MCF 10A (cell line): ENCODE measurements at regions of chr7 and their contacts with region 1.

Region 1: DNA sequence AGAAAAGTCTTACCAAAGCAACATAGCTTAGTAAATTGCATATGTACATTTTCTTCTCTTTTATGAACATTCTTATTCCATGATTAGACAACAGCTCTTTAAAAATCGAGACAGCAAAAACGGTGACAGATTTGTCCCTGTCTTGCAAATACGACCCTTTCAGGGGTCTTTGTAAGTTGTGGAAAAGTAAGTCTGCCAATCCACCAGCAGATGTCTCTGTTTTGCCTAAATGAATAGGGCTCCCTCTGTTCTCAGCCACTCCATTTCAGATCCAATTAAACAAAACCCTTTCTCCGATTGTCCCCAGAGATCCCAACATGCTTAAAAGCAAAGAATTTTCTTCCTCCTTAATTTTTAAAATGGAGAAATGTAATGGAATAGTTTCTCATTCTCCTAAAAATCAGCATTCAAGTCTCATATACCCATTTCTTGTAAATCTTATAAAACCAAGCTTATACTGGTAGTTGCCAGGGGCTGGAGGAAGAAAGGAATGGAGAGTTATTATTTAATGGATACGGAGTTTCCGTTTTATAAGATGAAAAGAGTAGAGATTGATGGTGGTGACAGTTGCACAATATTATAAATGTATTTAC is 61.0 kb upstream of the NFE2L3 start:
- DNase-seq: peak; percentile 60
- H3K4me3 Mint-ChIP-seq: no peak overlapping the region
- H3K27ac Mint-ChIP-seq: no peak overlapping the region
- H3K4me1 Mint-ChIP-seq: peaks cover 26% of the 10 kb centered on the region
- H3K27me3 Mint-ChIP-seq: no peaks in the 10 kb centered on the region
- CTCF ChIP-seq: peak; percentile 78

Region 2: DNA sequence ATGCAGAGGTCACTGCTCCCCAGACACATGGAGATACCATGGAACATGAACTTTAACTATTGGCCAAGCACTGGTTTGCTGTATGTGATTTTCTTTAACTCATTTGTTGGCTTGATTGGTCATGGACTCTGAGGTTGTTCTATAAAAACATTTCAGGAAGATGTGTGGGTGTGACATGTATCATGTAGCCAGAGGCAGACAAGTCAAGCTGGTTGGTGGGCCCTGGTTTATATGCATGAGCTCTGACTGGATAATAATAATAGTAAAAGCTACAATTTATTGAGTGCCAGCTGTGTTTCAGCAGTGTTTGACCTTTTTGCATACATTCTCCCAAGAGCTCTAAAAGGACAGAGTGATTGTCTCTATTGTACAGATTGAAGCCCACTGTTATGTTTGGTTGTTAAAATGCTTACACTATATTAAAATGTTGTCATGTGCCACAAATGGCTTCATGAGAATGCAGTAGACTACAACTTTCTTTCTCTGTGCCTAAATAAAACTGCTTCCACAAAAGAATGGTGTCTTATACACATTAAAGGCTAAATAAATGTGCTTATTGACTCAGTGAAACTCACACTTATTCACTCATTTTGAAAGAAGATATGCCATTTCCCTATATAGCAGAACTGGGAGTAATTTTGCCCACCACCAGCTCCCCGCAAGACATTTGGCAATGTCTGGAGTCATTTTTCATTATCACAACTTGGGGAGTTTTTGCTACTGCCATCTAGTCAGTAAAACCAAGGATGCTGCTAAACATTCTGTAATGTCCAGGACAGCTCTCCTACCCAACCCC is 182.7 kb before region 1 on chr7:
- CTCF ChIA-PET with region 1: no interaction called
- POLR2A ChIA-PET with region 1: no interaction called
- intact Hi-C with region 1: no loop called
- DNase-seq: no peak
- H3K4me3 Mint-ChIP-seq: no peak overlapping the region
- H3K27ac Mint-ChIP-seq: no peak overlapping the region
- H3K4me1 Mint-ChIP-seq: no peaks in the 10 kb centered on the region
- H3K27me3 Mint-ChIP-seq: no peaks in the 10 kb centered on the region
- CTCF ChIP-seq: no peak

Region 3: GRCh38 chr7:26078437-26079336 is 12.3 kb before region 1 on chr7:
- CTCF ChIA-PET with region 1: interaction called, 22 read pairs
- POLR2A ChIA-PET with region 1: interaction called, 3 read pairs
- intact Hi-C with region 1: no loop called
- DNase-seq: peak; percentile 39
- H3K4me3 Mint-ChIP-seq: no peak overlapping the region
- H3K27ac Mint-ChIP-seq: no peak overlapping the region
- H3K4me1 Mint-ChIP-seq: no peaks in the 10 kb centered on the region
- H3K27me3 Mint-ChIP-seq: no peaks in the 10 kb centered on the region
- CTCF ChIP-seq: peak; percentile 20

Region 4: DNA sequence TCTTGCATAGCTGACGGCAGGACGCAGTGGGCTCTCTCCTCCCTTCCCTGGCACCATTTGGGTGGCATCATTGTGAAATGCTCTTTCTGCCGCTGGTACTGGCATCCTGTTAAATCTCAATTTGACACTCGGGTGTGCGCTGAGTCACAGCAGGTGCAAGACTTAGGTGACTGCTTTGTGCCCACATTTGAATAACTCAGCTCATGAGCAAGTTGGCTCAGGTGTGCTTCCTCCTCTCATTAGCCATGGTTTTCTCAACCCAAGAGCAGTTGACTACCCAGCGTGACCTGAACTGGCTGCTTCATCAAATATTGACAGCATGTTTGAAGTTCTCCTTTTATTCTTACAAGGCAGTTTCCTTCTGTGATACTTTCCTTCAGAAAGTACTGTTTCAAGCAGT is 36.4 kb after region 1 on chr7:
- CTCF ChIA-PET with region 1: interaction called, 19 read pairs
- POLR2A ChIA-PET with region 1: no interaction called
- intact Hi-C with region 1: no loop called
- DNase-seq: peak; percentile 3
- H3K4me3 Mint-ChIP-seq: no peak overlapping the region
- H3K27ac Mint-ChIP-seq: no peak overlapping the region
- H3K4me1 Mint-ChIP-seq: no peaks in the 10 kb centered on the region
- H3K27me3 Mint-ChIP-seq: no peaks in the 10 kb centered on the region
- CTCF ChIP-seq: no peak

Region 5: GRCh38 chr7:26160881-26161280 is 69.9 kb after region 1 on chr7:
- CTCF ChIA-PET with region 1: interaction called, 12 read pairs
- POLR2A ChIA-PET with region 1: interaction called, 3 read pairs
- intact Hi-C with region 1: no loop called
- DNase-seq: no peak
- H3K4me3 Mint-ChIP-seq: no peak overlapping the region
- H3K27ac Mint-ChIP-seq: no peak overlapping the region
- H3K4me1 Mint-ChIP-seq: peaks cover 4% of the 10 kb centered on the region
- H3K27me3 Mint-ChIP-seq: no peaks in the 10 kb centered on the region
- CTCF ChIP-seq: no peak

Region 6: GRCh38 chr7:26187380-26188205 is 96.6 kb after region 1 on chr7:
- CTCF ChIA-PET with region 1: interaction called, 43 read pairs
- POLR2A ChIA-PET with region 1: interaction called, 268 read pairs
- intact Hi-C with region 1: no loop called
- DNase-seq: no peak
- H3K4me3 Mint-ChIP-seq: no peak overlapping the region
- H3K27ac Mint-ChIP-seq: no peak overlapping the region
- H3K4me1 Mint-ChIP-seq: no peaks in the 10 kb centered on the region
- H3K27me3 Mint-ChIP-seq: no peaks in the 10 kb centered on the region
- CTCF ChIP-seq: no peak

Region 7: DNA sequence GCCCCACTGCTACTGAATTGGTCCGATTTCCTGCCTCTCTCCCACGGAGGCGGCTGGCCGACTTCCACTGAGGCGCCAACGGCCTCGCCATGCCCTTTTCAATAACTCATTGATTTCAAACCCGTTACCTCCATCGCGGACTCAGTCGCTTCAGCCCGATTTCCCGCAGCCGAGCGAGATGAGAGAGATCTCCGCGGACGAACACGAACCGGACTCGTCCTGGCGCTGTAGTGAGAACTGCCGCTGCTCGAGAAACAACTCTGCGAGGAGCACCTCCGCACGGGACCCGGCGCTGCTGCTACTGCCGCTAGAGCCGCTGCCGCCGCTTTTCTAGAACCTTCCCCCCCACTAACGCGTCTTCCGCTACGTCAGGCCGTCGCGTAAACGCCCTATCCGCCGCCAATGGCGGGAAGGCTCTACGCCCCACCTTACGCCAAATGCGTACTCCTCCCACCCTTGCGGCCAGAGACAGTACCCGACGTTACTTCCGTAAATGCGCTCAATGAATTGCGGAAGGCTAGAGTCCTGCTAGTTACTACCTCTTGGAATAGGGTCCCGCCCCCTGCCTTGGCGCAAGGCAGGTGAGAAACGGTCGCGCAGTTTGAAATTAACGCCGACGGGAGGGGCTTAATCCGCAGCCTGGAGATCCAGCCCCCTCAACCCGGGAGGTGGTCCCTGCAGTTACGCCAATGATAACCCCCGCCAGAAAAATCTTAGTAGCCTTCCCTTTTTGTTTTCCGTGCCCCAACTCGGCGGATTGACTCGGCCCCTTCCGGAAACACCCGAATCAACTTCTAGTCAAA is 109.6 kb after region 1 on chr7 and contains the start of gene HNRNPA2B1:
- CTCF ChIA-PET with region 1: interaction called, 123 read pairs
- POLR2A ChIA-PET with region 1: interaction called, 268 read pairs
- intact Hi-C with region 1: loop called (anchors 1 kb)
- DNase-seq: peak; percentile 98
- H3K4me3 Mint-ChIP-seq: peak within 1 kb of the TSS; percentile 98
- H3K27ac Mint-ChIP-seq: peak within 1 kb of the TSS; percentile 99
- H3K4me1 Mint-ChIP-seq: peaks cover 37% of the 10 kb centered on the region
- H3K27me3 Mint-ChIP-seq: no peaks in the 10 kb centered on the region
- CTCF ChIP-seq: no peak
- total RNA-seq, gene HNRNPA2B1: 592 and 646 TPM in 2 replicates

Region 8: GRCh38 chr7:26667500-26668133 is 576.6 kb after region 1 on chr7:
- CTCF ChIA-PET with region 1: interaction called, 5 read pairs
- POLR2A ChIA-PET with region 1: interaction called, 3 read pairs
- intact Hi-C with region 1: loop called (anchors 1 kb)
- DNase-seq: peak; percentile 96
- H3K4me3 Mint-ChIP-seq: no peak overlapping the region
- H3K27ac Mint-ChIP-seq: no peak overlapping the region
- H3K4me1 Mint-ChIP-seq: peaks cover 16% of the 10 kb centered on the region
- H3K27me3 Mint-ChIP-seq: no peaks in the 10 kb centered on the region
- CTCF ChIP-seq: peak; percentile 90